B cell (primary cell): ENCODE measurements at regions of chr2 and their contacts with region 1.

Region 1: DNA sequence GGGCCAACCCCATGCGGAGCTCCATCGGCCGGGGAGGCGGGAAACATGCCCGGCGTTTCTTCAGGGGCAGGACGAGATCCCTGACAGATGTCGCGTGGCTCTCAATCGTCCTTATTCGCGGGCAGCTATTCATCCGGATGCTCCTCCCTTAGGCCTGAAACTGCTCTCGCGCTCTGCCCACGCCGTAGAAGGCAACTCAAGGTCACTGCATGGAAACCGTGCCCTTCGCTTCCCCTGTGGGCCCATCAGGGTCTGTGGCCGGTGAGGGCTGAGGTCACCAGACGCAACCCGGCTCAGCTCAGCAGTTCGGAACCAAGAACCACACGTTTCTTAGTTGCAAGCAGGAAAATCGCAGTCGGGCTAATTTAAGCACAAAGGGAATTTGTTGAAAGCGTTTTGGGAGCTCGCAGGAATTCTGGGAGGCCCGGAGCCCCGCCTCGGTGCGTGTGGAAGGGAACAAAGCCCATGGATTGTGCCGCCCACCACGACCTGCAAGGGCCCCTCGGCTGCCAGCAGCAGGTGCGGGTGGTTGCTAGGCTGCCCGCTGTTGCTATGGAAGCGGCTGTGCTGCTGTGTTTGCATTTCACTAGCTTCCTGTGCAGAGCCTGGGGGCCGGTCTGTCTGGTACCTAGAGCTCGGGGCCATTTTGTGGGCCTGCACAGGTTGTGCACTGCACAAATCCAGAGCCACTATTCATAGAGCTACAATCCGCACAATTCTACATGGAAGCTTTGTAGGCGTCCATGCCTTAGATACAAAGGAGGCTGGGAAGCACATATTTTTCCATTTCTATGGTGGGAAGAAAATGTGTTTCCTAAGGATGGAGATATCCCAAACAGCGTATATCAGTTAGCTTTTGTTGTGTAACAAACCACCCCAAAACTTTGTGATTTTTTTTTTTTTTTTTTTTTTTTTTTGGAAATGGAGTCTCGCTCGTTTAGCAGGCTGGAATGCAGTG is 6.0 kb upstream of the ALLC start:
- DNase-seq: peak; percentile 70
- ATAC-seq: peak; percentile 70
- H3K4me3 ChIP-seq: peak overlapping the region; percentile 16 to 66 (median 46)
- H3K4me3 Mint-ChIP-seq: peak overlapping the region; percentile 93
- H3K27ac ChIP-seq: peak overlapping the region; percentile 53 to 54
- H3K27ac Mint-ChIP-seq: peak overlapping the region; percentile 86
- H3K4me1 ChIP-seq: peaks cover 14 to 15% of the 10 kb centered on the region in 2 donors
- H3K4me1 Mint-ChIP-seq: peaks cover 16% of the 10 kb centered on the region
- H3K27me3 ChIP-seq: peaks cover 0 to 16% (median 1%) of the 10 kb centered on the region in 4 experiments
- H3K27me3 Mint-ChIP-seq: no peaks in the 10 kb centered on the region
- CTCF ChIP-seq: no peak

Region 2: DNA sequence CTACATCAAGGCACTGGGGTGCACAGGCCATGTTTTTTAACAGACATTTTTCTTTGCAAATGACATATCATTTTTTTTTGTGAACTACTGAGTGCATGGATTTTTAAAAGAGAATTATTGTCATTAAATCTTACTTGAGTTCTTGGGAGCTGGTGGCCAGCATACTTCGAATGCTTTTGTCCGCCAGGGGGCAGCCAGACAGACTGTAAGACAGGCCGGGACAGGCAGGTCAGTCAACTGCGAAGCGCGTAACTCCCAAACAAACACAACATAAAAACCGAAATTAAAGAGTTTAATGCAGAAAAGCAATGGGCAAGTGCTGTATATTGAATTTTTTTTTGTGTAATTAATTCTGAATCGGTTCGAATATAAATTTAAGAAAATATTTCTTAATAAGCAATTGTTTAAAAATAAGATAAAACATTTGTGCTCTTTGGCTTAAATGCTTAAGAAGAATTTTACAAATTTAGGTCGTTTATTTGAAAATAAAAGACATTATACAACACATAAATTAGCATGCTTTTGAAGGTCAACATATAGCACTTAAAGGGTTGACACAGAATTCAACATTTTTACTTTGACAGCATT is 1765.5 kb before region 1 on chr2:
- CTCF ChIA-PET with region 1: no interaction called
- POLR2A ChIA-PET with region 1: no interaction called
- intact Hi-C with region 1: loop called (anchors 10 kb)
- DNase-seq: peak; percentile 32
- ATAC-seq: no peak
- H3K4me3 ChIP-seq: no peak overlapping the region
- H3K4me3 Mint-ChIP-seq: no peak overlapping the region
- H3K27ac ChIP-seq: no peak overlapping the region
- H3K27ac Mint-ChIP-seq: no peak overlapping the region
- H3K4me1 ChIP-seq: no peaks in the 10 kb centered on the region
- H3K4me1 Mint-ChIP-seq: peaks cover 1% of the 10 kb centered on the region
- H3K27me3 ChIP-seq: no peaks in the 10 kb centered on the region
- H3K27me3 Mint-ChIP-seq: peaks cover 18% of the 10 kb centered on the region
- CTCF ChIP-seq: peak; percentile 45

Region 3: DNA sequence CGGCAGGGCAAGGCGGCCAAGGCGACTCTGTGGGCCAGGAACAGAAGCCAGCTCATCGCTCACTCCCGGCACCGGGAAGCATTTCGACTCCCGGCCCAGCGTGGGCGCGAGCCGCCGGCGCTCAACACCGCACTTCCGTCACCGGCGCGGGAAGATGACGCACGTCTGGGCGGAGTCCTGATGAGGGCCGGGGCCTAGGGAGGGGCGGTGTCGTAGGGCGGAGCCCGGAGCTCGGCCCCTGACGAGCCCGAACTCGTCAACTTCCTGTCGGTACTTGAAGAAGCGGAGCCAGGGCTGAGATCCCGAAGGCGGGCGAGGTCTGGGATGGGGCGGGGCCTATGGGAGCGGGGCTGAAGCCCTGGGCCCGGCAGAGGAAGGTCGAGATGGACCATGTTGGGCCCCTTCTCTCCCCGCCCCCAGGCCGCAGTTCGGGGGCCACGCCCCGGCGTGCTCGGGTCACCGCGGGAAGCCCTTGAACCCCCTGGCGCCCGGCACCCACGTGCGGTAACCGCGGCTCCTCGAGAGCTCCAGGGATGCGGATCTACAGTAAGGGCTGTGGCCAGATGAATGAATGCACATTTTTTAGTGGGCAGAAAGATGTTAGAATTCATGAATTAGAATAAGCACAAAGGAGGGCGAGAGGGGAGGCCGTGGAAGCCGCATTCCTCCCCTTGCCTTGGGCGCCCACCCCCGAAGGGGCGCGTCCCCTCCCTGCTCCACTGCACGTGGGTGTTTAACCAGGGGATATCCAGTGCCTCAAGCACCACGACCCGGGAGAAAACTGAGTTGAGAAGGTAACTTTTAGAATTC is 93.6 kb before region 1 on chr2 and contains the start of gene RNASEH1:
- CTCF ChIA-PET with region 1: no interaction called
- POLR2A ChIA-PET with region 1: interaction called, 4 read pairs
- intact Hi-C with region 1: loop called (anchors 1 kb)
- DNase-seq: peak; percentile 98
- ATAC-seq: peak; percentile 96
- H3K4me3 ChIP-seq: peak within 1 kb of the TSS; percentile 69 to 87 (median 86)
- H3K4me3 Mint-ChIP-seq: peak within 1 kb of the TSS; percentile 95
- H3K27ac ChIP-seq: peak within 1 kb of the TSS; percentile 88 to 94
- H3K27ac Mint-ChIP-seq: peak within 1 kb of the TSS; percentile 98
- H3K4me1 ChIP-seq: peaks cover 21 to 35% of the 10 kb centered on the region in 2 donors
- H3K4me1 Mint-ChIP-seq: peaks cover 49% of the 10 kb centered on the region
- H3K27me3 ChIP-seq: no peaks in the 10 kb centered on the region
- H3K27me3 Mint-ChIP-seq: no peaks in the 10 kb centered on the region
- CTCF ChIP-seq: no peak
- total RNA-seq, gene RNASEH1: 24.2 and 25.1 TPM in 2 replicates